Dorsolateral prefrontal cortex (tissue), 120 donors: ENCODE measurements at regions of chr13 and their contacts with region 1.

Region 1: DNA sequence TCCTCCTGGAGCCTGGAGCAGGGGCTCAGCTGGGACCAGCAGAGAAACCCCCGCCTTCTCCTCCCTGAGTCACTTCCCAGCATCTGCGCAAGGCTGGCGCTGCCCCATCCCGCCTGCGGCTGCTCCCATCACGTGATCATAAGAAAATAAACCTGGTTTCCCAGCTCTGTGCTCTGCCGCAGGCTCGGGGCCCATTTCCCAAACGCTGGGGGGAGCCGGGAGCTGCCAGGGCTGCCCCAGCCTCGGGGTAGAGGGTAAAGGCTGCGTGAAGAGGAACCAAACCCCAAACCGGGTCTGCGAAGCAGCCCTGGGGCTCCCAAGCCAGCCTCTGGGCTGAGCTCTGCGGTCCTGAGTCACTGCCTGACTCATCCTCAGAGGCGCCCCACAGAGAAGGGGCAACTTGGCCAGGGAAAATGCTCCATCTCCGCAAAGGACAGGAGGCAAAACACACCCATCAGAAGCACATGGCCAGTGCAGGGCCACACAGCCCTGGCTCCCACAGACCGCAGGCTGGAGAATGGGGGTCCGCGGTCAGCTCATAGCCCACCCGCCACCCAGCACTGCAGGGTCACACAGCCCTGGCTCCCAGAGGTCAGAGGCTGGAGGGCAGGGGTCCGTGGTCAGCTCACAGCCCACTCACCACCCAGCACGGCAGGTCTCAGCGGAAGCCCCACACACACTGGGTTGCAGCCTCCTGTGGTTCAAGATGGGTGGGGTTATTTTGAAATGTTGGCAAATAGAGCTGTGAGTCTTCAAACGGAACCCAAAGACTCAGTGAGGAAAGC is 67.1 kb downstream of the RASA3 start:
- DNase-seq: peak; percentile 58 to 92 (median 78)
- H3K4me3 ChIP-seq: peak overlapping the region in 58 of 59 donors; percentile 18 to 70 (median 50)
- H3K27ac ChIP-seq: peak overlapping the region; percentile 81 to 100 (median 98)
- H3K27me3 ChIP-seq: no peaks in the 10 kb centered on the region
- CTCF ChIP-seq: peak in 6 of 56 donors; percentile 7 to 26 (median 12)

Region 2: GRCh38 chr13:113724780-113725315 is 340.5 kb before region 1 on chr13:
- intact Hi-C with region 1: no loop called
- DNase-seq: peak; percentile 68 to 89 (median 82)
- H3K4me3 ChIP-seq: peak overlapping the region; percentile 48 to 86 (median 67)
- H3K27ac ChIP-seq: peak overlapping the region in 57 of 59 donors; percentile 4 to 92 (median 82)
- H3K27me3 ChIP-seq: peaks cover 0 to 14% (median 0%) of the 10 kb centered on the region in 45 donors
- CTCF ChIP-seq: peak; percentile 43 to 87 (median 70)

Region 3: GRCh38 chr13:114035583-114036531 is 29.5 kb before region 1 on chr13:
- intact Hi-C with region 1: loop called in 1 of 2 experiments (anchors 1 kb)
- DNase-seq: peak; percentile 44 to 93 (median 86)
- H3K4me3 ChIP-seq: peak overlapping the region; percentile 7 to 67 (median 42)
- H3K27ac ChIP-seq: peak overlapping the region; percentile 40 to 97 (median 91)
- H3K27me3 ChIP-seq: no peaks in the 10 kb centered on the region
- CTCF ChIP-seq: peak in 7 of 56 donors; percentile 5 to 21 (median 13)

Region 4: DNA sequence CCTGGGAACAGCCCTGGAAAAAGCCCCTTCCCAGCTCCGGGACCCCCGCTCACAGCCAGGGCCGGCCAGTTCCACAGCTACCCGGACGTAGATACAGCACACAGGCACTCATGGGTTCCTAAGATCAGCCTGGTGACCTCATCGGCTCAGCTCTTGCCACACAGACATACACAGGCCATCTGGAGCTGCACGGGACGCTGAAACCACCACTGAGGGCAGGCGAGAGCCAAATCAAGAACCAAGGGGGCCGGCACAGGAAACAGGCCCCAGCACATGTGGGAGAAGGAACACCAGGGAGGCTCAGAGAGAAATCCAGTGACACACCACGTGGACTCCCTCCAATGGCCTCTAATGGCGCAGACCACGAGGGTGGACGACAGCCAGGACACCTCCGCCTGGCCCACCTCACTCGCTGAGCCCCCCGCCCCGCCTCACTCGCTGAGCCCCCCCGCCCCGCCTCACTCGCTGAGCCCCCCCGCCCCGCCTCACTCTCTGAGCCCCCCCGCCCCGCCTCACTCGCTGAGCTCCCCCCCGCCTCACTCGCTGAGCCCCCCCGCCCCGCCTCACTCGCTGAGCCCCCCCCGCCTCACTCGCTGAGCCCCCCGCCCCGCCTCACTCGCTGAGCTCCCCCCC is 21.8 kb before region 1 on chr13:
- intact Hi-C with region 1: loop called in 1 of 2 experiments (anchors 2 kb)
- DNase-seq: peak in 1 of 10 donors; percentile 30
- H3K4me3 ChIP-seq: peak overlapping the region in 1 of 59 donors; percentile 38
- H3K27ac ChIP-seq: peak overlapping the region in 43 of 59 donors; percentile 5 to 80 (median 53)
- H3K27me3 ChIP-seq: no peaks in the 10 kb centered on the region
- CTCF ChIP-seq: no peak

Region 5: GRCh38 chr13:114132419-114133121 is 67.2 kb after region 1 on chr13 and contains the start of gene RASA3:
- intact Hi-C with region 1: loop called in 1 of 2 experiments (anchors 5 kb)
- DNase-seq: peak in 7 of 10 donors; percentile 53 to 86 (median 71)
- H3K4me3 ChIP-seq: peak within 1 kb of the TSS; percentile 49 to 93 (median 83)
- H3K27ac ChIP-seq: peak within 1 kb of the TSS; percentile 5 to 92 (median 80)
- H3K27me3 ChIP-seq: no peaks in the 10 kb centered on the region
- CTCF ChIP-seq: no peak
- total RNA-seq, gene RASA3: 31.0 to 93.4 (median 44.7) TPM

Region 6: GRCh38 chr13:114166381-114167131 is 101.2 kb after region 1 on chr13:
- intact Hi-C with region 1: loop called (anchors 5 kb)
- DNase-seq: peak; percentile 54 to 89 (median 78)
- H3K4me3 ChIP-seq: peak overlapping the region in 34 of 59 donors; percentile 1 to 46 (median 20)
- H3K27ac ChIP-seq: peak overlapping the region in 58 of 59 donors; percentile 3 to 91 (median 80)
- H3K27me3 ChIP-seq: peaks cover 0 to 7% (median 0%) of the 10 kb centered on the region in 45 donors
- CTCF ChIP-seq: peak in 26 of 56 donors; percentile 6 to 45 (median 20)